ENCODE measurements at regions of chr14 and their contacts with region 1.

Region 1: DNA sequence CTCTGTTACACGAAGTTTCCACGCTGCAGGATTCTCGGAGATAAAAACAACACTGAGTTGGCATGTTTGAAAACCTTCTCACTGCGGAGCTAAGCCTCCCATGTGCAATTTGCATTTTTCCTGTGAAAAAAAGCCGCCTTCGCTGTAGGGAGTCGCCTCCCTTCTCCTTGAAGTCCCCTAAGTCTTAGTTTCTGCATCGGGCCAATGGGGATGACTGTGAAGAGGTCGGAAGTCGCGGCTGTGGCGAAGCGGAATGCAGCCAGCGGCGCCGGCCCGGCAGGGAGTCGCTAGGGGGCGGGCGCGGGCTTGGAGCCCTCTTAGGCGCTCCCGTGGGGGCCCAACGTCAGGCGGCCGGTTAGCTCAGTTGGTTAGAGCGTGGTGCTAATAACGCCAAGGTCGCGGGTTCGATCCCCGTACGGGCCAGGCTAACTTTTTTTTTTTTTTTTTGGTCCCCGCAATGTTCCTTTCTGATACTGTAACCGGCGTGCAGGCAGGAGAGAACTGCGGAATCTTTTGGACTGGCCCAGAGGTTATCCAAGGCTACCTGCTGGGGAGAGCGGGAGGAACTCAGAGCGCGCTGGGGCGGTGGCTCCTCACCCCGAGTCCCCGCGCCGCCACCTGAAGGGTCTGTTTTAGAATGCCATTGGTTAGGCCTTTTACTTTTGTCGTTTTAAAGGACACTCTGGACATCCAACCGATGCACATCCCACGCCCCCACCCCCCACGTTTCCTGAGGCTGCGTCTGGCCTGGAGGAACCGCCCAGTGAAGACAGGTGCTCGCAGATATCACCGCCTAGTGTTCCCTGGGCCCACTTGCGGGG is 2.6 kb upstream of the ZNF839 start:
- DNase-seq: peak; percentile 86 to 93
- ATAC-seq: peak; percentile 65 to 82
- H3K4me3 ChIP-seq: peak overlapping the region; percentile 51
- H3K27ac ChIP-seq: peak overlapping the region; percentile 79 to 99
- H3K4me1 ChIP-seq: peaks cover 36% of the 10 kb centered on the region
- CTCF ChIP-seq: peak; percentile 68
- EP300 ChIP-seq: no peak; a peak in 1 of 5 replicates
- POLR2A ChIP-seq: no peak; the same call in 1 of the 2 replicates
- RAD21 ChIP-seq: peak in 1 of 2 experiments; percentile 11; a peak in 2 of 5 replicates

Region 2: DNA sequence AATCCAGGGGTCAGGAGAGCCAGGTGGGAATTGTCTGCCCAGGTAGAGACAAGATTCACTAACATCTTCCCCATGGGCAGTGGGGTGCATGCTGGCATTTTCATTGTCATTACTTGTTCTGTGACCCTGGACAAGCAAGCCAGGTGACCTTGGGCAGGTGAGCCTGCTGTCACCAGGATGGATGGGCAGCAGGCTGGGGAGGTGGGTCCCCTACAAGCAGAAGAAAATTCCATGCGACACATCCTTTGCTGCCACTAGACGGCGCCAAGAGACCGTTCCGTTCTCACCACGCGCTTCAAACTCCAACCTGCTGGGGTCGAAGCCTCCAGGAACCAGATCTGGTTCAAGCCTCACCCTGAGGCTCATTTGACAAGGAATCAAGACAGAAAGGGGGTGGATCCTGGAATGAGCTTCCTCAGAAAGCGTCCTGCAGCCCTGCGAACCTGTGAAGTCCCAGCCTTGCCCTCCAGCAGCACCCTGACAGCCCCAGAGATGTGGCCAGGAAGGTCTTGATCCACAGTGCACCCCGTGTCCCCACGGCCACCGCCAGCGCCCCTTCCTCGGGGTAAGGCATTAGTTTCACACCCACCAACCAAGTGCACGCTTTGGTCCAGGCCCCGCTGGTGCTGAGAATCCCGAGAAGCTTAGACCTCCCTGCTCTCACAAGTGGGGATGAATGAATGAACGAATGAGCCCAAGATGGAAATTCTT is 355.8 kb before region 1 on chr14:
- CTCF ChIA-PET with region 1: interaction called, 34 read pairs
- POLR2A ChIA-PET with region 1: interaction called, 3 read pairs
- DNase-seq: peak; percentile 77 to 89
- ATAC-seq: peak; percentile 11 to 60
- H3K4me3 ChIP-seq: no peak overlapping the region
- H3K27ac ChIP-seq: peak overlapping the region; percentile 82 to 99
- H3K4me1 ChIP-seq: peaks cover 28% of the 10 kb centered on the region
- CTCF ChIP-seq: peak; percentile 96
- EP300 ChIP-seq: no peak
- POLR2A ChIP-seq: no peak
- RAD21 ChIP-seq: peak; percentile 96 to 97

Region 3: GRCh38 chr14:102182190-102182589 is 134.8 kb before region 1 on chr14:
- CTCF ChIA-PET with region 1: interaction called, 13 read pairs
- POLR2A ChIA-PET with region 1: no interaction called
- DNase-seq: no peak
- ATAC-seq: no peak
- H3K4me3 ChIP-seq: no peak overlapping the region
- H3K27ac ChIP-seq: 0 out of 6 replicates have a peak overlapping the region, but pooled peaks of 1 of the 2 experiments have one; percentile 33
- H3K4me1 ChIP-seq: peaks cover 57% of the 10 kb centered on the region
- CTCF ChIP-seq: no peak
- EP300 ChIP-seq: no peak
- POLR2A ChIP-seq: no peak
- RAD21 ChIP-seq: no peak

Region 4: DNA sequence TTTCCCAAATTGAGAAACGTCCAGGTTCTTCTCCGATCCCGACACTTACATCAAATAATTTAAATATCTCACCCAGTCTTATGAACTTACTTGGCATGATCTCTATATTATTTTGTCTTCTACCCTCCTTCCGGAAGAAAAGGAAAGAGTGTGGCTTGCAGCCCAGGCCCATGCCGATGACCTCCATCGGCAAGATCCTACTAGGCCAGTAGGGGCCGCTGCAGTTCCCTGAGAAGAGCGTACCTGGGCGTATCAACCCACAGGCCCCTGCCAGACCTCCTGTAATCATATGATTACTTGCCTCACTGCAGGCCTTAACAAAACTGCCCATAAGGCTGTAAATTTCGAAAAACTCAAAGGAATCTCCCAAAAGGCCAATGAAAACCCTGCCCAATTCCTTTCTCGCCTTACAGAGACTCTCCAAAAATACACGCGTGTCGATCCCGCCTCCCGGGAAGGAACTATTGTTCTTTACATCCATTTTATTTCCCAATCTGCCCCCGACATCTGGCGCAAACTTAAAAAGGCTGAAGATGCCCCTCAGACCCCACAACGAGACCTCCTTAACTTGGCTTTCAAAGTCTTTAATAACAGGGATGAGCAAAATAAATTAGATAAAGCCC is 81.6 kb before region 1 on chr14:
- CTCF ChIA-PET with region 1: interaction called, 83 read pairs
- POLR2A ChIA-PET with region 1: no interaction called
- DNase-seq: peak; percentile 85 to 97
- ATAC-seq: peak; percentile 91 to 98
- H3K4me3 ChIP-seq: no peak overlapping the region
- H3K27ac ChIP-seq: peak overlapping the region; percentile 61 to 76
- H3K4me1 ChIP-seq: peaks cover 10% of the 10 kb centered on the region
- CTCF ChIP-seq: peak; percentile 92
- EP300 ChIP-seq: no peak
- POLR2A ChIP-seq: no peak
- RAD21 ChIP-seq: peak; percentile 93 to 96

Region 5: GRCh38 chr14:102264775-102265174 is 52.2 kb before region 1 on chr14:
- CTCF ChIA-PET with region 1: interaction called, 14 read pairs
- POLR2A ChIA-PET with region 1: no interaction called
- DNase-seq: no peak
- ATAC-seq: peak in 1 of 2 experiments; percentile 47; a peak in 2 of 6 replicates
- H3K4me3 ChIP-seq: no peak overlapping the region
- H3K27ac ChIP-seq: peak overlapping the region in 1 of 2 experiments; percentile 67; a peak in 3 of 6 replicates
- H3K4me1 ChIP-seq: peaks cover 16% of the 10 kb centered on the region
- CTCF ChIP-seq: no peak
- EP300 ChIP-seq: no peak
- POLR2A ChIP-seq: no peak
- RAD21 ChIP-seq: no peak

Region 6: GRCh38 chr14:102333795-102334705 is 17.1 kb after region 1 on chr14:
- CTCF ChIA-PET with region 1: interaction called, 100 read pairs
- POLR2A ChIA-PET with region 1: no interaction called
- DNase-seq: no peak
- ATAC-seq: no peak
- H3K4me3 ChIP-seq: no peak overlapping the region
- H3K27ac ChIP-seq: no peak overlapping the region
- H3K4me1 ChIP-seq: no peaks in the 10 kb centered on the region
- CTCF ChIP-seq: no peak
- EP300 ChIP-seq: no peak
- POLR2A ChIP-seq: no peak
- RAD21 ChIP-seq: no peak

Region 7: GRCh38 chr14:102461490-102462338 is 144.8 kb after region 1 on chr14:
- CTCF ChIA-PET with region 1: no interaction called
- POLR2A ChIA-PET with region 1: no interaction called
- DNase-seq: no peak
- ATAC-seq: no peak
- H3K4me3 ChIP-seq: no peak overlapping the region
- H3K27ac ChIP-seq: no peak overlapping the region
- H3K4me1 ChIP-seq: no peaks in the 10 kb centered on the region
- CTCF ChIP-seq: no peak
- EP300 ChIP-seq: no peak
- POLR2A ChIP-seq: no peak
- RAD21 ChIP-seq: no peak

Region 8: GRCh38 chr14:102539580-102540314 is 222.8 kb after region 1 on chr14:
- CTCF ChIA-PET with region 1: no interaction called
- POLR2A ChIA-PET with region 1: no interaction called
- DNase-seq: no peak
- ATAC-seq: no peak
- H3K4me3 ChIP-seq: no peak overlapping the region
- H3K27ac ChIP-seq: peak overlapping the region in 1 of 2 experiments; percentile 48; a peak in 2 of 6 replicates
- H3K4me1 ChIP-seq: peaks cover 27% of the 10 kb centered on the region; the same call in 2 of the 3 replicates
- CTCF ChIP-seq: no peak
- EP300 ChIP-seq: no peak
- POLR2A ChIP-seq: no peak
- RAD21 ChIP-seq: no peak

Measured in A549 (cell line).